Gastrocnemius medialis (tissue), 4 donors: ENCODE measurements at regions of chr5 and their contacts with region 1.

Region 1: DNA sequence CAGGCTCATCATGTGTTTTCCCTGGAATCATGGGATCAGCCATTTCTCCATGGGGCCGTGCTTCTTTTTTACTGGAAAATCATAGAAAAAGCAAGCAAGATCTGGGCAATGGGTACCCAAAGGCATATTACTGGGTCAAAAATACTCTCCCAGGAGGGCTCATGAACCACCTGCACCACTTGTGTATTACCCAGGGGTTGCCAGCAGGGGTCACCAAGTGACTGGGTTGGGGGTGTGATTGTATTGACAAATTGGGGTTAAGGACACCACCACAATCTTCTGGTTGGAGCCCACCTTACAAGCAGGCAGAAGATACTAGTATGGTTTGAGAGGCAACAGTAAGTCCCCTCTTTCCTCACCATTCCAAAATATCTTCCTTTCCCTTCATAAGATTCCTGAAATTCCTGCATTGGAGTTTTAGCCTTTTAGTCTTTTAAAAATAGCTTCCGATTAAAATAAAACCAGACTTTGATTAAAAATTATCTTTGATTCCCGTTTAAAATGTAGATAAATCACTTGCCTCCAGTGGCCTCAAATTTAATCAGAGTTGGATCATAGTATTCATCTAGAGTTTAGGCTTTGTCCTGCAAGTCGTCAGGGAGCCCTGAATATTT is 603.3 kb downstream of the KIF4B start:
- DNase-seq: peak in 1 of 2 donors; percentile 12
- ATAC-seq: no peak
- H3K4me3 ChIP-seq: no peak overlapping the region
- H3K27ac ChIP-seq: no peak overlapping the region
- H3K4me1 ChIP-seq: no peaks in the 10 kb centered on the region
- H3K27me3 ChIP-seq: no peaks in the 10 kb centered on the region
- CTCF ChIP-seq: peak; percentile 31 to 67 (median 62)
- POLR2A ChIP-seq: no peak

Region 2: DNA sequence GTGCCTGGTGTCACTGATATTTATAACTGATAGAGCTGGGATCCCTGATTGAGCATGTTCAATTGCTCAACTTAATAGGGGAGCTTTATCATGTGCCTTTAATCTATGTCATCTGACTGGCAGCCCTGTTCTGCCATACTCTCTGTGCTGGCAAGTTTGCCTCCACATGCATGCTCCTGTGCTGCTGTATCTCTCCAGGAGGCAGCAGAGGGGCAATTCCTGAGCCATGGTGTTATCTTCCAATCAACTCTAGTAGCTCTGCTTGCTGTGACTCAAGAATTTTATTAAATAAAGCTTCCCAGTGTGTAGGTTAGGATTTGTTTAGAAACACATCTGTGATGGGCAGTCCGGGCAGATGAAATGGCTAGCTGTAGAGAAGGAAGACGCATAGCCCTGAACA is 38.7 kb after region 1 on chr5:
- in situ Hi-C with region 1: no loop called
- intact Hi-C with region 1: no loop called
- DNase-seq: no peak
- ATAC-seq: no peak
- H3K4me3 ChIP-seq: no peak overlapping the region
- H3K27ac ChIP-seq: no peak overlapping the region
- H3K4me1 ChIP-seq: no peaks in the 10 kb centered on the region
- H3K27me3 ChIP-seq: no peaks in the 10 kb centered on the region
- CTCF ChIP-seq: no peak
- POLR2A ChIP-seq: no peak

Region 3: GRCh38 chr5:155827949-155828348 is 211.1 kb after region 1 on chr5:
- in situ Hi-C with region 1: no loop called
- intact Hi-C with region 1: loop called (anchors 10 kb)
- DNase-seq: no peak
- ATAC-seq: no peak
- H3K4me3 ChIP-seq: no peak overlapping the region
- H3K27ac ChIP-seq: no peak overlapping the region
- H3K4me1 ChIP-seq: no peaks in the 10 kb centered on the region
- H3K27me3 ChIP-seq: no peaks in the 10 kb centered on the region
- CTCF ChIP-seq: no peak
- POLR2A ChIP-seq: no peak

Region 4: DNA sequence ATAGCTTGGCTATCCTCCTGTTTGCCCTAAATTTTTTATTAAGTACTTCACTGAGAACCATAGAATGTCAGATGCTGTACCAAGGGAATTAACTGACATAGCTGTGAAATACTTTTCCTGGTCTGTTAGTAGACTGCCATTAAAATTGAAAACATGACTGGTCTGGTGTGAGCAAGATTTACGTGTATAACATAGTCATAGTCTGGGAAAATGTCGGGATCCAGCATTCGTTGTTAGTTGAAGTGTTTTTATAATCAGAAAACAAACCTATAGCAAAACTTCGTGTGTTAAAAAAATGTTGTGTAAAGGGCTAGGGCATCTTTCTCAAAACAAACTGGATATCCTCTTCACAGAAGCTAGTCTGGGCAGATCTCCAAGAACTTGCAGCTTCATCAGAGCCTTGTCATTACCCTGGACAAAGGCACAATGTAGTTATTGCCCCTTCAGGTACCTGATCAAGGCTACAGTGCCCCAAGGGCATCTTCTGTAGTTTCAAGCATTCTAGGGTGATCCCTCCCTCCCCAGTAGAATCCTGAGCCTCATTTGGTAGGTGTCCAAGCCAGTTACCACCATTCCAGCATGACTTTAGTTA is 255.8 kb after region 1 on chr5:
- in situ Hi-C with region 1: no loop called
- intact Hi-C with region 1: no loop called
- DNase-seq: no peak
- ATAC-seq: no peak
- H3K4me3 ChIP-seq: no peak overlapping the region
- H3K27ac ChIP-seq: no peak overlapping the region
- H3K4me1 ChIP-seq: no peaks in the 10 kb centered on the region
- H3K27me3 ChIP-seq: no peaks in the 10 kb centered on the region
- CTCF ChIP-seq: no peak
- POLR2A ChIP-seq: no peak

Region 5: GRCh38 chr5:155906046-155906445 is 289.2 kb after region 1 on chr5:
- in situ Hi-C with region 1: no loop called
- intact Hi-C with region 1: loop called (anchors 5 kb)
- DNase-seq: no peak
- ATAC-seq: no peak
- H3K4me3 ChIP-seq: no peak overlapping the region
- H3K27ac ChIP-seq: no peak overlapping the region
- H3K4me1 ChIP-seq: no peaks in the 10 kb centered on the region
- H3K27me3 ChIP-seq: no peaks in the 10 kb centered on the region
- CTCF ChIP-seq: no peak
- POLR2A ChIP-seq: no peak

Region 6: GRCh38 chr5:156824800-156825199 is 1207.9 kb after region 1 on chr5:
- in situ Hi-C with region 1: no loop called
- intact Hi-C with region 1: loop called (anchors 2 kb)
- DNase-seq: no peak
- ATAC-seq: peak in 1 of 2 donors; percentile 78
- H3K4me3 ChIP-seq: no peak overlapping the region
- H3K27ac ChIP-seq: no peak overlapping the region
- H3K4me1 ChIP-seq: no peaks in the 10 kb centered on the region
- H3K27me3 ChIP-seq: no peaks in the 10 kb centered on the region
- CTCF ChIP-seq: peak; percentile 33 to 50 (median 39)
- POLR2A ChIP-seq: no peak